Common myeloid progenitor, CD34-positive (primary cell): ENCODE measurements at regions of chr1 and their contacts with region 1.

Region 1: DNA sequence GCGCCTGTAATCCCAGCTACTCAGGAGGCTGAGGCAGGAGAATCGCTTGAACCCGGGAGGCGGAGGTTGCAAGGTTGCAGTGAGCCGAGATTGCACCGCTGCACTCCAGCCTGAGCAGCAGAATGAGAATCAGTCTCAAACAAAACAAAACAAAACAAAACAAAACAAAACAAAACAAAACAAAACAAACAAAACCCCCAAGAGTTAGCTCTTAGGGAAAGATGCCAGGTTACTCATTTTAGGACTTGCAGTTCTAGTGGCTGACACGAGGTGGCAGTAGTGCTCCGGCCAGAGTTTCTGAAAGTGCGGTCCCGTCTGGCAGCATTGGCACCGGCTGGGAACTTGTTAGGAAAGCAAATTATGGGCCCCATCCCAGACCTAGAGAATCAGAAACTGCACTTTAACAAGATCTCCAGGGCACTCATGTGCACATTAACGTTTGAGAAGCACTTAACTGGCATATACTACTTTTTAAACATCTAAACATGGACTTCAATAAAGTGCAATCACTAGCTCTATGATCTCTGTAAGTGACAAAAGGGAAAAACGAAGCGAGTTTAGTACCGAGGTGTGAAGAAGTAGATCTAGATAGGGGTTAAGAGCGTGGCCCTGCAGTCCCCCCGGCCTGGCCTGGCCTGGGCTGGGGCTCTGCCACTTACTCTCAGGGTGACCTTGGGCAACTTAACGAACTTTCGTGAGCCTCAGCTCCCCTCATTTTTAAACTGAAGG is 41.9 kb upstream of the TNFRSF1B start:
- DNase-seq: peak; percentile 69 to 80 (median 74)
- H3K4me3 ChIP-seq: no peak overlapping the region
- H3K27ac ChIP-seq: no peak overlapping the region
- H3K4me1 ChIP-seq: peaks cover 4 to 21% (median 18%) of the 10 kb centered on the region in 4 experiments
- H3K27me3 ChIP-seq: no peaks in the 10 kb centered on the region

Region 2: DNA sequence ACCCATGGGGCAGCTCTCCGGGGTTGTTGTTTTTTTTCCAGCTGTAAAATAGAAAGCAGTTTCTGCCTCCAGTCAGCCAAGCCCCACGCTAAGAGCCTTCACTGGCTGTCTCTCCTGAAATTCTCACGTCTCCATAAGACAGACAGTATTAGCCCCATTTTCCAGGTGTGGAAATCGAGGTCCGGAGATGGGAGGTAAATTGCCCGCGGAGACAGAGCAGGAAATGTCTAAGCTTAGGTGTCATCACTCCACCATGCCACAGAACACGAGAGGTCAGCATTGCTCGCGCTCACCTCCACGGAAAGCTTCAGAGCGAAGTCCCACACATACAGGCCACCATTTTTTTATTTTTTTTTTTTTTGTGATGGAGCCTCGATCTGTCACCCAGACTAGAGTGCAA is 17.1 kb before region 1 on chr1:
- CTCF ChIA-PET with region 1: interaction called, 10 read pairs
- POLR2A ChIA-PET with region 1: interaction called, 3 read pairs
- DNase-seq: no peak
- H3K4me3 ChIP-seq: no peak overlapping the region
- H3K27ac ChIP-seq: no peak overlapping the region
- H3K4me1 ChIP-seq: no peaks in the 10 kb centered on the region
- H3K27me3 ChIP-seq: no peaks in the 10 kb centered on the region

Region 3: DNA sequence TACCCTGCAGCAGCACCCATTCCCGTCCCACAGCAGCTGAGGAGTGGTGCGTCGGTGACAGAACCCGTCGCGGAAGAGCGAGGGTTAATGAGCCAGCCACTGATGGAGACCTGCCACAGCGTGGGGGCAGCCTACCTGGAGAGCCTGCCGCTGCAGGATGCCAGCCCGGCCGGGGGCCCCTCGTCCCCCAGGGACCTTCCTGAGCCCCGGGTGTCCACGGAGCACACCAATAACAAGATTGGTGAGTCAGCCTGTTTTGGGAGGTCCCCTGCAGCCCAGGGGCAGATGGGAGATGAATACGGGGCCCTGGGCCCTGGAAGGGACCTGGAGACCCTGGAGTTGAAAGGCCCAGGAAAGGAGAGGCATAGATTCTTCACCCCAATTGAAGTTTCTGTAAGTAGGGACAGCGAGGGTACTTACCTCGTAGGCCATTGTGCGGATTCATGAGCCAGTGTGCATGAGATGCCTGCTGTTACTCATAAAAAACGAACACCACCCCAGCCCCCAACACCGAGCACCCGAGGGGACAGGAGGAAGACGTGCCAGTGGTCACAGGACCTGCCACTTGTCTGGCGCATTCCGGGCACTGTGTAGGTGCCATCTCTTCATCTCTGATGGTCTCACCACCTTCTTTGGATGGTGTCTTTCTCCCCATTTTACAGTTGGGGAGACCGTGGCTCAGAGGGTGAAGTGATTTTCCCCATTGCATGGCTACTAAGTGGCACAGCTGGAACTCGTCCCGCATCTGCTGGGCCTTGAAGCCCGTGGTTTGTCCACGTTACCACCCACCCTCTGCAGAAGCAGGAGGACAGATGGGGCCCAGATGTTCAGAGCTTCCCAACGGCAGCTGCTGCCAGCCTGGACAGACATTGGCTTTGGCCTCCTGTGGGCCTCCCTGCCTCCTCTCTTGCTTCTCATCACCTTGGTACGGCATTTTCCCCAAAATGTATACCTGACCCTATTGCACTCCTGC is 13.6 kb after region 1 on chr1:
- CTCF ChIA-PET with region 1: interaction called, 12 read pairs
- POLR2A ChIA-PET with region 1: no interaction called
- DNase-seq: no peak
- H3K4me3 ChIP-seq: no peak overlapping the region
- H3K27ac ChIP-seq: no peak overlapping the region
- H3K4me1 ChIP-seq: peaks cover 0 to 37% (median 33%) of the 10 kb centered on the region in 4 experiments
- H3K27me3 ChIP-seq: no peaks in the 10 kb centered on the region

Region 4: GRCh38 chr1:12152113-12152891 is 27.4 kb after region 1 on chr1:
- CTCF ChIA-PET with region 1: interaction called, 13 read pairs
- POLR2A ChIA-PET with region 1: no interaction called
- DNase-seq: peak in 2 of 3 donors; percentile 58 to 72
- H3K4me3 ChIP-seq: no peak overlapping the region
- H3K27ac ChIP-seq: no peak overlapping the region
- H3K4me1 ChIP-seq: peaks cover 33 to 76% (median 63%) of the 10 kb centered on the region in 4 experiments
- H3K27me3 ChIP-seq: no peaks in the 10 kb centered on the region

Region 5: DNA sequence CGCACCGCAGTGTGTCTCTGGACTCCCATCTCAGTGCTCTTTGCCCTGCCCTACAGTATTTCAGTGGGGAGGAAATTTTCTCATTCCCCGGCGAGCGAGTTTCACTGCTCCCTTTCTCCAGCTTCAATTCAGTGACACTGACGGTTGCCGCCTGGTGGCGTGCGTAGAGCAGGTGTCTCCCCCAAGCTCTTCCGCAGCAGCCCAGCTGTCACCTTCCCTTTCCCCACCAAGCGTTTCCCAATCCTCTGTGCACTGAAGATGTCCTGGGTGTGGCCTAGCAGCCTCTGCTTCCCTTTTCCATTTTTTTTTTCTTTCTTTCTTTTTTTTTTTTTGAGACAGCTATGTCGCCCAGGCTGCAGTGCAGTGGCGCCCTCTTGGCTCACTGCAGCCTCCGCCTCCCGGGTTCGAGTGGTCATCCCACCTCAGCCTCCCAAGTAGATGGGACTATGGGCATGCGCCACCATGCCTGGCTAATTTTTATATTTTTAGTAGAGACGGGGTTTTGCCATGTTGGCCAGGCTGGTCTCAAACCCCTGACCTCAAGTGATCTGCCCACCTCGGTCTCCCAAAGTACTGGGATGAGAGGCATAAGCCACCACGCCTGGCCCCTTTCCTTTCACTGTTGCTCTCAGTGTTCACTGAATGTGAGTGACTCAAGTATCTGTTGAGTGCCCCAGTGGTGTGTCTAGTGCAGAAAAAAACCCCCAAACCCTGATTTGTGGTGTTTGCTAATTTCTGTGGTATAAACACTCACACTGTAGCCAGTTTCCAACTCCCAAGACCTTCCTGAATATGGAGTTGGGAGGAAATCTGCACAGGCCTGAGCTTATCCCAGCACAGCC is 72.0 kb after region 1 on chr1:
- CTCF ChIA-PET with region 1: interaction called, 63 read pairs
- POLR2A ChIA-PET with region 1: interaction called, 3 read pairs
- DNase-seq: peak in 2 of 3 donors; percentile 41 to 45
- H3K4me3 ChIP-seq: no peak overlapping the region
- H3K27ac ChIP-seq: no peak overlapping the region
- H3K4me1 ChIP-seq: peaks cover 0 to 11% (median 1%) of the 10 kb centered on the region in 4 experiments
- H3K27me3 ChIP-seq: no peaks in the 10 kb centered on the region

Region 6: GRCh38 chr1:12215118-12215961 is 90.5 kb after region 1 on chr1:
- CTCF ChIA-PET with region 1: interaction called, 213 read pairs
- POLR2A ChIA-PET with region 1: no interaction called
- DNase-seq: peak in 2 of 3 donors; percentile 38 to 61
- H3K4me3 ChIP-seq: no peak overlapping the region
- H3K27ac ChIP-seq: no peak overlapping the region
- H3K4me1 ChIP-seq: peaks cover 0 to 11% (median 8%) of the 10 kb centered on the region in 4 experiments
- H3K27me3 ChIP-seq: no peaks in the 10 kb centered on the region